ENCODE measurements at regions of chr19 and their contacts with region 1.

Region 1: GRCh38 chr19:19663256-19664038 is at the start of gene ATP13A1:
- DNase-seq: peak; percentile 87 to 99
- H3K4me3 ChIP-seq: peak within 1 kb of the TSS; percentile 80 to 92
- H3K27ac ChIP-seq: peak within 1 kb of the TSS; percentile 88 to 93
- H3K4me1 ChIP-seq: peaks cover 6 to 17% of the 10 kb centered on the region in 2 donors
- H3K27me3 ChIP-seq: no peaks in the 10 kb centered on the region
- CTCF ChIP-seq: no peak
- total RNA-seq, gene ATP13A1: 161 TPM

Region 2: DNA sequence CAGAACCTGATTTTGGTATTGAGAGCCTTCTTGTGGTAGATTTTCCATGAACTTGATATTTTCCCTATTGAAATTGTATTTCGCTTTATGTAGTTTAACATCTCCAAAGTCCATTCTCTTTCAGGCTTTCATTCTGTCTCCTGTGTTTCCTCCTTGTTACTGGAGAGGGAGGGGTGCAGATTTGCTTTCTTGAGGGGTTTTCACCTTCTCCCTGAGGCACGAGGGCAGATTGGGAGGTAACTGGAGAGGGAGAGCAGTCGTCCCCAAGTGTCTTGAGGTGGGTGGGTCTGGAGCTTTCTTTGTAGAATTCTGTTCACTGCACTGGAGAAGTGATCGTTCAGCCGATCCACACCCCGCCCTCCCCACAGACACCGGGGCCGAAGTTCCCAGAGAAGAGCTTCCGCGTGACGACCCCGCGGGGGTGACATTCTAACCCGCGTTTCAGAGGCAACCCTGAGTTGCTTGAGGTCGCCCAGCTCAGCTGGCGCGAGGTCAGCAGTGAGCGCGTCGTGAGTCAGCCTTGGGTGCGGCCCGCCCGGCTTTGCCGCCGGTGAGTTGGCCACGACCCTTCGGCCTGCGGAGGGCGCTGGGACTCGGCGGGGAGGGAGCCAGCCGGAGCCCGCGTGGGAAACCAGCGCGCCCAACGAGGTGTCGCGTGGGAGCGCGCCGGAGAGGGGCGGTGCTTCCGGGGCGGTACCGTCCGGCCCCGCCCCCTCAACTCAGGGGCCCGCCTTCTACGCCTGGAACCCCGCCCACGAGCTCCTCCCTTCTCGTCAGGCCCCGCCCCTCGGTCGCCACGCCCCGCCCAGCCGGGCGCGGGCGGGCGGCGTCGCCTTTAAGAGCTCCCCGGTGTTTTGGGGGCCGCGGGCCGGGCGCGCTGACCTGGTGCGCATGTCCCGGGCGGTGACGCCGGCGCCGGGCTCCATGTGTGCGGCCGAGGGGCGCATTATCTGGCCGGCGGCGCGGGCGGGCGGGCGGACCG is 258.3 kb before region 1 on chr19 and contains the start of gene GATAD2A:
- intact Hi-C with region 1: loop called (anchors 10 kb)
- DNase-seq: peak; percentile 77 to 96
- H3K4me3 ChIP-seq: peak within 1 kb of the TSS; percentile 91 to 99
- H3K27ac ChIP-seq: peak within 1 kb of the TSS; percentile 89 to 91
- H3K4me1 ChIP-seq: peaks cover 3 to 24% of the 10 kb centered on the region in 2 donors
- H3K27me3 ChIP-seq: no peaks in the 10 kb centered on the region
- CTCF ChIP-seq: peak; percentile 20 to 44 (median 44)
- total RNA-seq, gene GATAD2A: 63.3 TPM

Region 3: GRCh38 chr19:19526581-19527370 is 136.7 kb before region 1 on chr19:
- intact Hi-C with region 1: no loop called
- DNase-seq: no peak
- H3K4me3 ChIP-seq: no peak overlapping the region
- H3K27ac ChIP-seq: no peak overlapping the region
- H3K4me1 ChIP-seq: peaks cover 0 to 2% of the 10 kb centered on the region in 2 donors
- H3K27me3 ChIP-seq: no peaks in the 10 kb centered on the region
- CTCF ChIP-seq: no peak

Region 4: GRCh38 chr19:19578252-19578651 is 85.2 kb before region 1 on chr19:
- intact Hi-C with region 1: no loop called
- DNase-seq: no peak
- H3K4me3 ChIP-seq: no peak overlapping the region
- H3K27ac ChIP-seq: no peak overlapping the region
- H3K4me1 ChIP-seq: no peaks in the 10 kb centered on the region
- H3K27me3 ChIP-seq: no peaks in the 10 kb centered on the region
- CTCF ChIP-seq: no peak

Region 5: DNA sequence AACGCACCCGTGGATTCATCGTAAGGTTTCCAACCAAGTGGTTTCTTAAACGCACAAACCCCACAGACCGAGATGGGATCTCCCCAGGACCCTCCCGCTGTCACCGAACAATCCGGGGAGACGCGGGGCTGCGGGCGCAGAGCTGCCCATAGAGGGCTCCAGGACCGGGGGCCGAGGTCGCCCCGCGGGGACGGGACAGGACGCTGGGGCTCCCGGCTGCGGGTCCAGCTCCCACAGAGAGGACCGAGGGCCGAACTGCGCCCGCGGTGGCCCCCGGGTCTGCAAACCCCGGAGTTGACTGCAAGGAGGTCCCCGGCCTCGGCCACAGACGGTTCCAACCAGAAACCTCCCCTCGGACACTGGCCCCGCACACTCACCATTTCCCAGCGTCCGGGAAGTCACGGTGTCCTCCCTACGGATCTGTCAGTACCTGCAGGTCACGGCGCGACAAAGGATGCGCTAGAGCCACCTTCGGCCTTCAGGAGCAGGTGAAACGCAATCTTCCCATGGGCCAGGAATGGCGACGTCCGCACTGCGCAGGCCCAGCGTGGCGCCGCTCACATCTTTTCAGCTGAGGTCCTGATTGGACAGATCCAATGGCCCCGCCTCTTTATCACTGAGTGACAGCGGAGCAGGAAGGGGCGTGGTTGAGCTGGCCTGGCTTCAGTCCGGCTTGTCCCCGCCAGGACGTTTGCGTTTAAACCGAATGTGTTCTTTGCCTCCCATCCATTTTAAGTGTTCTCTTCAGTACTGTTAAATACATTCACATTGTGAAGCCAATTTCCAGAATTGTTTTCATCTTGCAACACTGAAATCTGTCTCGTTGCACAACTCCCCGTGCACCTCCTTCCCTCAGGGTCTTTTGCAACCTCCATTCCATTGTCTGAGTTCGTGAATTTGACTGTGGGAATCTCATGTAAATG is 69.4 kb after region 1 on chr19 and contains the start of gene ZNF14:
- intact Hi-C with region 1: loop called (anchors 5 kb)
- DNase-seq: peak; percentile 74 to 96
- H3K4me3 ChIP-seq: peak within 1 kb of the TSS; percentile 91 to 95
- H3K27ac ChIP-seq: peak within 1 kb of the TSS; percentile 72 to 79
- H3K4me1 ChIP-seq: no peaks in the 10 kb centered on the region
- H3K27me3 ChIP-seq: no peaks in the 10 kb centered on the region
- CTCF ChIP-seq: peak in 2 of 3 experiments; percentile 20 to 24
- total RNA-seq, gene ZNF14: 4.8 TPM

Region 6: DNA sequence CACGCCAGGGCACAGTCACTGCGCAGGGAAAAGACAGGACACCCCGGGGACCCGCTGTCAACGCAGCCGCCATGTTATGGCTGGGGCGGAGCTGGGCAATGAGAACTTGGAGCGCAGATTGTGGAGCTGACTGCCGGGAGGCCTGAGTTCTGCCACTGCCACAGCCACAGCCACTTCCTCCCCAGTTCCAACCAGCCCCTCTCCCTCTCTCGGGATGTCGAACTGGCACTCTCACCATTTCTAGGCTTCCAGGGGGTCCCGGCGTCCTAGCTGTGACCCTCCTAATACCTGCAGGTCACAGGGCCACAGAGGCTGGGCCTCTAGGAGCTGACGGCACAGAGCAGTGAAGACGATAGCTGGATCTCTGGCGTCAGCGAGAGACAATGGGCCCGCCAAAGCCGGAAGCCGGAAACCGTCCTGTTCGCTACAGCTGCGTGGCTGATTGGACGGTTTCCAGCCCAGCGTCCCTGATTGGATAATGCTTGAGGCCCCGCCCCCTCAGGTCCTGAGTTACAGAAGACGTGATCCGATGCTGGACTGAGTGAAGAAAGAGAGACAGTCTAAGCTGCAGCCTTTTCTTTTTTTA is 158.0 kb after region 1 on chr19 and contains the start of gene ZNF506:
- intact Hi-C with region 1: loop called (anchors 5 kb)
- DNase-seq: peak; percentile 96 to 99
- H3K4me3 ChIP-seq: peak within 1 kb of the TSS; percentile 66 to 69
- H3K27ac ChIP-seq: peak within 1 kb of the TSS; percentile 83 to 93
- H3K4me1 ChIP-seq: no peaks in the 10 kb centered on the region
- H3K27me3 ChIP-seq: no peaks in the 10 kb centered on the region
- CTCF ChIP-seq: no peak
- total RNA-seq, gene ZNF506: 22.4 TPM

Region 7: DNA sequence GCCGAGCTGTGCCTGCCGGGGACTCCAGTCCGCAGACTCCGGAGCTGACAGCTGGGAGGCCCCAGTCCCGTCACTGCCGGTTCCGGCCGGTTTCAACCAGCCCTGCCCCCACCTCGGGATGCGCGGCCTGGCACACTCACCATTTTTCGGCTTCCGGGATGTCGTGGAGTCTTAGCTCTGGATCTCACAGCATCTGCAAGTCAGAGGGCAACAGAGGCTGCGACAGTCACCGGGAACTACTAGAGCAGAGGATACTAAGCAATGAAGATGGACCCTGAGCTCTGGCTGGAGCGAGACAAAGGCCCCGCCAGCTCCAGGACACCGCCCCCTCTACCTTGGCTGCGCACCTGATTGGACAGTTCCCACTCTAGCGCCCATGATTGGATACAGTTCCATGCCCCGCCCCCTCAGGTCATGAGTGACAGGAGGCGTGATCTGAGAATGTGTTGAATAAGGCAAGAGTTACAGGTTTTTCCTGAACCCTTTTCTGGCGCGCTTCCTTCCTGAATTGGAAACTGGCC is 375.8 kb after region 1 on chr19 and contains the start of gene ZNF682:
- intact Hi-C with region 1: loop called (anchors 5 kb)
- DNase-seq: peak; percentile 89 to 98
- H3K4me3 ChIP-seq: peak within 1 kb of the TSS; percentile 75 to 82
- H3K27ac ChIP-seq: peak within 1 kb of the TSS; percentile 45 to 51
- H3K4me1 ChIP-seq: peaks cover 0 to 6% of the 10 kb centered on the region in 2 donors
- H3K27me3 ChIP-seq: no peaks in the 10 kb centered on the region
- CTCF ChIP-seq: no peak
- total RNA-seq, gene ZNF682: 1.1 TPM

Region 8: DNA sequence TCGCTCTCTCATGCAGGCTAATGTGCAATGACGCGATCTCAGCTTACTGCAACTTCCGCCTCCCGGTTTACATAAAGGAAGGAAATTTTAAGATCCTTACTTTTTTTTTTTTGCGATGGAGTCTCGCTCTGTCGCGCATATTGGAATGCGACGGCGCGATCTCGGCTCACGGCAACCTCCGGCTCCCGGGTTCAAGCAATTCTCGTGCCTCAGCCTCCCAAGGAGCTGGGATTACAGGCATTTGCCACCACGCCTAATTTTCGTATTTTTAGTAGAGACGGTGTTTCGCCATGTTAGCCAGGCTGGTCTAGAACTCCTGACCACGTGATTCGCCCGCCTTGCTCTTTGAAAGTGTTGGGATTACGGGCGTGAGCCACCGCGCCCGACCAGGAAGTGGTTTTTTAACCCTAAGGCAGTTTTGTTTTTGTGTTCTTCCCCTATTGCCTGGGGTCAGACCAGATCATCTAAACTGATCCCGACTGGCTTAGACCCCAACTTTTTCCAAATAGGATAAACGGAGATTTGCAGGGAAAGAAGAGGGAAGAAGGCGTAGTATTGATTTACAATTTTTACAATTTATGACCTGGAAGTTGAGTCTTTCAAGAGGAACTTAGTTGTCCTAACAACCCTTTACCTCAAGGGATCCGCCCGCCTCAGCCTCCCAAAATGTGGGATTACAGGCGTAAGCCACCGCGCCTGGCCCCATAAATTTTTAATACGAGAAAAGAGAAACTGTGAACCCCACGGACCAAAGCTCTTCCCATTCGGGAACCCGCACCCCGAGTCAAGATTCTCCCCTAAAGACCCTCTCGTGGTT is 760.1 kb after region 1 on chr19:
- intact Hi-C with region 1: loop called (anchors 10 kb)
- DNase-seq: peak; percentile 26 to 80
- H3K4me3 ChIP-seq: peak overlapping the region; percentile 63 to 71
- H3K27ac ChIP-seq: peak overlapping the region; percentile 77 to 87
- H3K4me1 ChIP-seq: peaks cover 0 to 3% of the 10 kb centered on the region in 2 donors
- H3K27me3 ChIP-seq: no peaks in the 10 kb centered on the region
- CTCF ChIP-seq: no peak